ENCODE measurements at regions of chr12 and their contacts with region 1.

Region 1: DNA sequence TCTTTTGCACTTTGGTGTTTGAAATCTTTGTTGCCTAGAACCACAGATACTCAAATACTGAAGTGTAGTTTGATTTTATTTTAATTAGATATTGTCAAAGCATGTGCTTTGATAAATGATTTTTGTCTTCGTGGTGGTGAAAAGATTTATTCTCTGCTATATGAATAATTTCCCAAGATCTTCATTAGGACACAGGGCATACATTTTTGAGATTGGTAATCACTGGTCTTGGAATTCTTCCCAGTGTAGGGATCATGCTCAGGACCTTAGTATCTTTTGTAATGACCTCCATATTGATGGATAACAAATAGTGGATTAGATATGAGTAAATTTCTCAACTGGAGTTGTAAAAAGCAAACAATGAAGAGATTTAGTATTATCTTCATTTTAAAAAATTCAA is 28.2 kb downstream of the TBK1 start:
- DNase-seq: no peak
- ATAC-seq: no peak

Region 2: GRCh38 chr12:64362721-64363300 is 117.3 kb before region 1 on chr12:
- intact Hi-C with region 1: no loop called
- DNase-seq: no peak
- ATAC-seq: no peak

Region 3: GRCh38 chr12:64373193-64373592 is 107.0 kb before region 1 on chr12:
- intact Hi-C with region 1: no loop called
- DNase-seq: no peak
- ATAC-seq: no peak

Region 4: DNA sequence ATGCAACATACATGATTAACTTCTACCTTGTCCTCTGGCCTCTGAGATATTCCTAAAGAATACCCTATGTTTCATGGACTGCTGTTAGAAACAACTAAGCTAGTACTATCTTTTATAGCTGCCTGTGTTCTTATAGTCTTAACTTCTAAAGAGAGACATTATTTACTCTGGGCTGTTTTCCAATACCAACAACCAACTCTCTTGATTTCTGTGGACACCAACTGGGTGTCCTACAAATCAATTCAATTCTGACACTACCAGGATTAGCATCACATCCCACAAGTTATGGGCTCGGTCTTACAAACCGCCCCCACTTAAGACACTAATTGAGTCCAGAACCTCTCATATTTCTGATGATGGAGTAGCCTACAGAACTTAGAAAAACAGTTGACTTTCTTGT is 67.7 kb before region 1 on chr12:
- intact Hi-C with region 1: loop called in 1 of 2 experiments (anchors 10 kb)
- DNase-seq: no peak
- ATAC-seq: no peak

Measured in left cardiac atrium (tissue), 4 donors.